ENCODE measurements at regions of chr9 and their contacts with region 1.

Region 1: DNA sequence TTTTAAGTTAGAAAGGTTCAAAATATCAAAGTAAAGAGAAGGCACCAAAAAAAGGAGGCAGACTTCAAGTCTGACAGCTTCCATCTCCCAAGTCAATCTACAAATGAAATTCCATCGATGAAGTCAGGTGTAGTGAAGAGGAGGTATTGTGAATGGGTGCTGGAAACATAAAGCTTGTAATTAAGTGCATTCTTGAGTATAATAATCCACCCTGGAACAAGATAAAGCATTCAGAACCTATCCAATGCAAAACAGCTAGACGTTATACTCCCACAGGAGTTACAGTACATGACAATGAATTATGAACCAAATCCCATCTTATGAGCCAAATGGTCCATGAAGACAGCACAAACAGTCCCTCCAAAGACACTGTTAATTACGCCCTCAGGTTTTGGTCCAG is 22.3 kb downstream of the BNC2 start:
- DNase-seq: no peak
- ATAC-seq: no peak
- H3K4me3 ChIP-seq: no peak overlapping the region
- H3K27ac ChIP-seq: no peak overlapping the region
- H3K4me1 ChIP-seq: no peaks in the 10 kb centered on the region
- H3K27me3 ChIP-seq: no peaks in the 10 kb centered on the region
- CTCF ChIP-seq: no peak
- POLR2A ChIP-seq: no peak

Region 2: GRCh38 chr9:16794871-16795639 is 53.1 kb before region 1 on chr9:
- intact Hi-C with region 1: loop called in 1 of 10 experiments (anchors 10 kb)
- DNase-seq: peak in 4 of 5 donors; percentile 22 to 54 (median 40)
- ATAC-seq: peak; percentile 74 to 95 (median 91)
- H3K4me3 ChIP-seq: no peak overlapping the region
- H3K27ac ChIP-seq: peak overlapping the region in 10 of 12 donors; percentile 5 to 65 (median 34)
- H3K4me1 ChIP-seq: peaks cover 0 to 16% (median 2%) of the 10 kb centered on the region in 12 donors
- H3K27me3 ChIP-seq: no peaks in the 10 kb centered on the region
- CTCF ChIP-seq: no peak
- POLR2A ChIP-seq: no peak